Transverse colon (tissue), 4 donors: ENCODE measurements at regions of chr7 and their contacts with region 1.

Region 1: GRCh38 chr7:98434095-98434494 is 33.2 kb upstream of the BAIAP2L1 start:
- DNase-seq: no peak
- H3K4me3 ChIP-seq: no peak overlapping the region
- H3K27ac ChIP-seq: no peak overlapping the region
- H3K4me1 ChIP-seq: no peaks in the 10 kb centered on the region
- H3K27me3 ChIP-seq: no peaks in the 10 kb centered on the region
- CTCF ChIP-seq: no peak
- EP300 ChIP-seq: no peak
- POLR2A ChIP-seq: no peak

Region 2: GRCh38 chr7:98251841-98252639 is 182.1 kb before region 1 on chr7 and contains the start of gene TECPR1:
- in situ Hi-C with region 1: no loop called
- intact Hi-C with region 1: no loop called
- DNase-seq: peak; percentile 97
- H3K4me3 ChIP-seq: peak within 1 kb of the TSS; percentile 65 to 97 (median 70)
- H3K27ac ChIP-seq: peak within 1 kb of the TSS; percentile 82 to 95 (median 93)
- H3K4me1 ChIP-seq: peaks cover 6 to 40% (median 25%) of the 10 kb centered on the region in 4 donors
- H3K27me3 ChIP-seq: no peaks in the 10 kb centered on the region
- CTCF ChIP-seq: peak in 1 of 5 experiments; percentile 9
- EP300 ChIP-seq: no peak
- POLR2A ChIP-seq: peak; percentile 72
- total RNA-seq, gene TECPR1: 23.1 to 43.0 (median 28.8) TPM

Region 3: DNA sequence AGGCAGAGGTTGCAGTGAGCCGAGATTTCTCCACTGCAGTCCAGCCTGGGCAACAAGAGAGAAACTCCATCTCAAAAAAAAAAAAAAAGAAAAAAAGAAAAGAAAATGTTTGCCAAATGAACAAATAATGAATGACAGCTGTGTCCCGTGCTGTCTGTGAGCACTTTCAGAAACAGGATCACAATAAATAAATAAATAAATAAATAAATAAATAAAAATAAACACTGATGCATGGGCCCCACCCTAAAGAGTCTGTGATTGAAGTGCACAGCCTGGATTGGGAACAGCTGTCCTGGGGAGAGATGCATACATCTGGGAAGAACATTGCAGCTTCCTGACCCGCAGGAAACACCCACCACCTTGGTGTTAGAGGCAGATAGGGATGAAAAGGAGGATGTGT is 306.5 kb after region 1 on chr7:
- in situ Hi-C with region 1: loop called in 3 of 4 experiments (anchors 5 to 10 kb)
- intact Hi-C with region 1: no loop called
- DNase-seq: no peak
- H3K4me3 ChIP-seq: no peak overlapping the region
- H3K27ac ChIP-seq: no peak overlapping the region
- H3K4me1 ChIP-seq: no peaks in the 10 kb centered on the region
- H3K27me3 ChIP-seq: no peaks in the 10 kb centered on the region
- CTCF ChIP-seq: no peak
- EP300 ChIP-seq: no peak
- POLR2A ChIP-seq: no peak

Region 4: DNA sequence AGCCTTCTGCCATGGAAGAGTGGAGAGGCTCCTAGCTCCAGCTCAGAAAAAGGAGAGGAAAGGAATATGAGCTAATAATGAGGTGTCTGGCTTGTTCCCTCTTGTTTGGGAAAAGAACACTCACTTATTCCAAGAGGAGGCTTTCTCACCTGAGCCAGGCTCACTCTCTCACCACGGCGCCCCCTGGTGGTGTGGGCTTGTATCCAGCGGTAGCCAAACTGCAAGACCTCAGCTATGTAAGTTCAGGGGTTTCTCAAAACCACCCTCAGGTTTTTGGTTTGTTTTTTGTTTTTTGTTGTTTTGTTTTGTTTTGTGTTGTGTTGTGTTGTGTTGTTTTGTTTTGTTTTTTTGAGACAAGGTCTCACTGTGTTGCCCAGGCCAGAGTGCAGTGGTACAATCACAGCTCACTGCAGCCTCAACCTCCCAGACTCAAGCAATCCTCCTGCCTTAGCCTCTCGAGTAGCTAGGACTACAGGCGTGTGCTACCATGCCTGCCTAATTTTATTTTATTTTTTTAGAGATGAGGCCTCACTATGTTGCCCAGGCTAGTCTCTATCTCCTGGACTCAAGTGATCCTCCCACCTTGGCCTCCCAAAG is 311.7 kb after region 1 on chr7:
- in situ Hi-C with region 1: loop called in 3 of 4 experiments (anchors 5 to 10 kb)
- intact Hi-C with region 1: no loop called
- DNase-seq: peak; percentile 79
- H3K4me3 ChIP-seq: no peak overlapping the region
- H3K27ac ChIP-seq: no peak overlapping the region
- H3K4me1 ChIP-seq: no peaks in the 10 kb centered on the region
- H3K27me3 ChIP-seq: no peaks in the 10 kb centered on the region
- CTCF ChIP-seq: peak; percentile 65 to 83 (median 76)
- EP300 ChIP-seq: no peak
- POLR2A ChIP-seq: no peak

Region 5: GRCh38 chr7:98841179-98841997 is 407.3 kb after region 1 on chr7:
- in situ Hi-C with region 1: loop called (anchors 5 kb)
- intact Hi-C with region 1: loop called (anchors 1 kb)
- DNase-seq: peak; percentile 56
- H3K4me3 ChIP-seq: no peak overlapping the region
- H3K27ac ChIP-seq: no peak overlapping the region
- H3K4me1 ChIP-seq: no peaks in the 10 kb centered on the region
- H3K27me3 ChIP-seq: peaks cover 8% of the 10 kb centered on the region
- CTCF ChIP-seq: peak; percentile 89 to 96 (median 96)
- EP300 ChIP-seq: no peak
- POLR2A ChIP-seq: no peak